ENCODE measurements at regions of chr14 and their contacts with region 1.

Region 1: GRCh38 chr14:100677554-100678468 is 48.9 kb upstream of the DLK1 start:
- DNase-seq: peak; percentile 83 to 90 (median 84)
- H3K4me3 ChIP-seq: no peak overlapping the region
- H3K27ac ChIP-seq: peak overlapping the region; percentile 75 to 92
- H3K4me1 ChIP-seq: peaks cover 32% of the 10 kb centered on the region
- H3K27me3 ChIP-seq: no peaks in the 10 kb centered on the region
- CTCF ChIP-seq: no peak
- EP300 ChIP-seq: no peak
- POLR2A ChIP-seq: peak; percentile 23

Region 2: DNA sequence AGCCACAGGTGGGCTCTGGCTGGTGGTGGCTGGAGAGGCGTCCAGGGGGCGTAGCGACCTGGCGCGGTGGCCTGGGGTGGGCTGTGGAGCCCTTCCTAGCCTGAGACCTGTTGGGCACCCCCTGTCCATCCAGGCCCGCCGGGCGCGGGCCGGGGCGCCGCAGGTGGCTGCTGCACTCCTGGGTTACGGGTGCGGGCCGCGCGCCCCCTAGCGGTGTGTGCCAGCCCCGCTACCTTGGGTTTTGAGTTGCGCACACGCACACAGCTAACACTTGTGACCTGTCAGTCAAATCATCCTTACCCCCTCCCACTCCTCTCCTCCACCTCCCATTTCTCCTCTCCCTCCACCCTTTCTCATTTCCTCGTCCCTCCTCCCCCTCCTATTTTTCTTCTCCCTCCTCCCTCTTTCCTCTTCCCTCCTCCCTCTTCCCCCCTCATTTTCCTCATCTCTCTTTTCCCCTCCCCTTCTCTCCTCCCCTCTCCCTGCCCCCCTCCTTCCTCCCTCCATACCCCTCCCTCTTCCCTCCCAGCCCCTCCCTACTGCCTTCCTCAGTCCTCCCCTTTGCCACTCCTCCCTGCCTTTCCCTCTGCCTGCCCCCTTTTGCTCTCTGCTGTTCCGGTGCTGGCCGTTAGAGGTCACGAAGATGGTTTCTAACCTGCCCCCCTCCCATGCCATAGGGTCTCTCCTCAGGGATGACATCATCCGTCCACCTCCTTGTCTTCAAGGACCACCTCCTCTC is 150.4 kb after region 1 on chr14:
- intact Hi-C with region 1: loop called in 1 of 4 experiments (anchors 5 kb)
- DNase-seq: peak; percentile 48 to 80 (median 59)
- H3K4me3 ChIP-seq: peak overlapping the region; percentile 49
- H3K27ac ChIP-seq: peak overlapping the region in 1 of 2 donors; percentile 72
- H3K4me1 ChIP-seq: peaks cover 2% of the 10 kb centered on the region
- H3K27me3 ChIP-seq: no peaks in the 10 kb centered on the region
- CTCF ChIP-seq: peak; percentile 20 to 63 (median 50)
- EP300 ChIP-seq: no peak
- POLR2A ChIP-seq: no peak